ENCODE measurements at regions of chr7 and their contacts with region 1.

Region 1: GRCh38 chr7:113404245-113404644 is 285.9 kb upstream of the SMIM30 start:
- DNase-seq: no peak
- H3K4me3 ChIP-seq: no peak overlapping the region
- H3K27ac ChIP-seq: no peak overlapping the region
- H3K4me1 ChIP-seq: no peaks in the 10 kb centered on the region
- H3K27me3 ChIP-seq: no peaks in the 10 kb centered on the region
- CTCF ChIP-seq: no peak; the same call in 1 of the 2 replicates

Region 2: DNA sequence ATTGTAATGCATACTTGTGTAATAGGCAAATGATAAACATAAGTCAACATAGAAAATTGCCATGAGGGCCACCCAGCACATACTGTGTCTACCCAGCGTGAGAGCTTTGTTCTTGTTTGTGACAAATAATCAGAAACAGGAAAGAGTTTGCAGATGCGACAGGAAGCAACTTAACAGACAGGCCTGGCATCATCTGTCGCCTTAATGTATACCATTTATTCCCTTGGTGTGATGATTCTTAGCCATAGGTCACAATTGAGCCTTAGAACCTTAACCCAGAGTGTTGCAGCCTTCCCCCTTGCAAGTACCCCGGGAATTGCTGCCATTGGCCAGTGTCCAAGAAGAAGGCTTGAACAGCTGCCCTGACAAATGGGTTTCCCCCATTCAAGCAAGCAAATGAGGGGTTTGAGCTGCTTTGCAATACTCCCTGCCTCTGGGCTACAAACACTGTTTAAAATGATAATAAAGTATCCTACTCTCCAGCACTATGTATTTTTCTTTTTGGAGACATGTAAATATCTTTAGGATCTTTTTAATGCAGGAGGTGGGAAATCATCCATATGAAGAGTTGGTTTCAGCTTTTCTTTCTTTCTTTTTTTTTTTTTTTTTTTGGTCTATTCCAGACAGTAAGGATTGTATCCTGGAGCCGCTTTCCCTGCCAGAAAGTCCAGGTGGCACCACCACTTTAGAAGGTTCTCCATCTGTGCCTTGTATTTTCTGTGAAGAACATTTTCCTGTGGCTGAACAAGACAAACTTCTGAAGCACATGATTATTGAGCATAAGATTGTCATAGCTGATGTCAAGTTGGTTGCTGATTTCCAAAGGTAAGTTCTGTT is 1117.8 kb before region 1 on chr7:
- CTCF ChIA-PET with region 1: interaction called, 17 read pairs
- POLR2A ChIA-PET with region 1: no interaction called
- intact Hi-C with region 1: no loop called
- DNase-seq: no peak
- H3K4me3 ChIP-seq: no peak overlapping the region
- H3K27ac ChIP-seq: no peak overlapping the region
- H3K4me1 ChIP-seq: no peaks in the 10 kb centered on the region
- H3K27me3 ChIP-seq: no peaks in the 10 kb centered on the region
- CTCF ChIP-seq: no peak

Region 3: GRCh38 chr7:112930787-112931186 is 473.5 kb before region 1 on chr7:
- CTCF ChIA-PET with region 1: no interaction called
- POLR2A ChIA-PET with region 1: no interaction called
- intact Hi-C with region 1: no loop called
- DNase-seq: no peak
- H3K4me3 ChIP-seq: no peak overlapping the region
- H3K27ac ChIP-seq: no peak overlapping the region
- H3K4me1 ChIP-seq: no peaks in the 10 kb centered on the region
- H3K27me3 ChIP-seq: no peaks in the 10 kb centered on the region
- CTCF ChIP-seq: no peak